Right cardiac atrium (tissue), 5 donors: ENCODE measurements at regions of chr10 and their contacts with region 1.

Region 1: DNA sequence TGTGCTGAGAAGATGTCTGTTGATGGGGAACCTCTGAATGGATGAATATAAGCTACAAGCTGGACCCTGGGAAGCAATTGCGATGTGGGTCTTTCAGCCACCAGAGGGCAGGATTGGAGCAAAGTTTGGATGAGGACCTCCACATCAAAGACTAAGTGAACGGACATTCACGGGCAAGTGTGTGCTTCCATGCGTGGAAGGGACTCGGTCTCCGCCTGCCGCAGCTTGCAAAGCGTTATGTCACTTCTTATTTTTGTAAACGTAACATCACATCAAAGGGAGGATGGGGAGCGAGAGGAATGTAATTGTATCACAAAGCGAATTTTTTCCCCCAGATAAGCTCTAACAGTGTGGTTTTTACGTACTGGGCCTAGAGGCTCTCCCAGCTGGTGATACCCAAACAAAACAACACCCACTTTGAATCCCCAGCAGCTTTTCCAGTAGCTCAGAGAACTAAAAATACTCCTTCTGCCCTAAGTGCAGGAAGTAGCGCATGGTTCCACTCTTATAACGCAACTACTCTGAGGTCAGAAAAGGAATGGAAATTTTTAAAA is 65.0 kb downstream of the VWA2 start:
- DNase-seq: peak; percentile 81 to 91 (median 85)
- ATAC-seq: peak; percentile 81 to 84
- H3K4me3 ChIP-seq: peak overlapping the region; percentile 7
- H3K27ac ChIP-seq: no peak overlapping the region
- H3K4me1 ChIP-seq: peaks cover 5% of the 10 kb centered on the region
- H3K27me3 ChIP-seq: no peaks in the 10 kb centered on the region

Region 2: DNA sequence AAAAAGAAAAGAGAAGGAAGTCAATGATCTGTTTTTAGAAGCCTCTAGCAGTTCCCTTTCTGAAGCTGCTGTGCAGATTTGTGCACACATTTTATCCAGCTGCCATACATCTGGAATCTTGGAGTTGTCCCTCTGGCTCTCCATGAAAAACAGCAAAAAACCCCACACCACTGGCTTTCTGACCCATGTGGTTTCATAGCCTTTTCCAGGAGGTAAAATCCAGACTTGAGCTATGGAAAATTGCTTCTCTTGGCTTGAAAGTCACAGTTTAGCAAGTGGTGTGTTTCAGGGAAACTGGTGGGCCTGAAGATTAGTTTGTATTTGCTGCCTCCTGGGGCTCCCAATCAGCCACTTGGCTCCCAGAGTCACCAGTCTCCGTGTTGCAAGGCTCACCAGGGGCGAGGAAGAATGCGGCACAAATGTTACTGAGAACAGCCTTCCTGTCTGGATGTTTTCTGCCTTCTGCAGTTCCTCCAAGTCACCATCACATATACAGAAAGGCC is 310.6 kb before region 1 on chr10:
- intact Hi-C with region 1: no loop called
- DNase-seq: peak; percentile 74 to 85 (median 81)
- ATAC-seq: peak; percentile 85 to 89
- H3K4me3 ChIP-seq: no peak overlapping the region
- H3K27ac ChIP-seq: peak overlapping the region; percentile 0
- H3K4me1 ChIP-seq: peaks cover 5% of the 10 kb centered on the region
- H3K27me3 ChIP-seq: no peaks in the 10 kb centered on the region

Region 3: DNA sequence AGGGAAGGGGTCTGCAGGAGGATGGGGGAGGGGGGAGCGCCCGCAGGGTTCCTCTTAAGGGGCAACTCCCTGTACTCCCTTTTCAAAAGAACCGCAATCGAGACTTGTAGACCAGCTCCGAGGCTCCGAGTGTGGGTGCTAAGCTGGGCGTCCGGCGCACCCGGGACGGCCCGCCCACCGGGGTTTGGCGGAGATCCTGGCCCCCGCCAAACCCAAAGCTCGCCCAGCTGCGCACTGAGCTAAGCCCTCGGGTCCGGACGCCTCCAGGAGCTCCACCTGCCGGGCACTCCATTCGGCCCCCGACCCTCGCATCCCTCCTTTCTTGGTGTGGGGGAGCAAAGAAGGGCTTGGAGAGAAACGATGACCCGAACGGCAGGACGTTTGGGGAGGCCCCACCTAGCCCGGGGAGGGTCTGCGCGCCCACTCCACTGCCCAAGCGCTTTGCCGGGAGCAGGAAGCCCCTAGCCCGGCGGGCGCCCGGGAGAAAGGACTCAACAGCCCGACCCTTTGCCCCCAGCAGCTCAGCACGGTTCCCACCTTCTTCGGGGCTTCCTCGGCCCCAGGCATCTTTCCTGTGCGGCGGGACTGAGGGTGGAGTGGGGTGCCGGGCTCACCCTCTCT is 99.6 kb after region 1 on chr10:
- intact Hi-C with region 1: no loop called
- DNase-seq: peak; percentile 35 to 75 (median 72)
- ATAC-seq: peak; percentile 66 to 74
- H3K4me3 ChIP-seq: peak overlapping the region; percentile 54
- H3K27ac ChIP-seq: no peak overlapping the region
- H3K4me1 ChIP-seq: no peaks in the 10 kb centered on the region
- H3K27me3 ChIP-seq: no peaks in the 10 kb centered on the region

Region 4: GRCh38 chr10:114427124-114427852 is 123.2 kb after region 1 on chr10:
- intact Hi-C with region 1: loop called in 2 of 4 experiments (anchors 5 to 10 kb)
- DNase-seq: peak in 1 of 3 donors; percentile 16
- ATAC-seq: peak; percentile 64 to 82
- H3K4me3 ChIP-seq: no peak overlapping the region
- H3K27ac ChIP-seq: peak overlapping the region; percentile 76
- H3K4me1 ChIP-seq: peaks cover 7% of the 10 kb centered on the region
- H3K27me3 ChIP-seq: no peaks in the 10 kb centered on the region

Region 5: GRCh38 chr10:114437456-114438292 is 133.6 kb after region 1 on chr10:
- intact Hi-C with region 1: loop called in 1 of 4 experiments (anchors 5 kb)
- DNase-seq: no peak
- ATAC-seq: no peak
- H3K4me3 ChIP-seq: no peak overlapping the region
- H3K27ac ChIP-seq: no peak overlapping the region
- H3K4me1 ChIP-seq: no peaks in the 10 kb centered on the region
- H3K27me3 ChIP-seq: no peaks in the 10 kb centered on the region

Region 6: GRCh38 chr10:114714281-114714741 is 410.2 kb after region 1 on chr10:
- intact Hi-C with region 1: no loop called
- DNase-seq: peak in 1 of 3 donors; percentile 45
- ATAC-seq: peak; percentile 66 to 79
- H3K4me3 ChIP-seq: no peak overlapping the region
- H3K27ac ChIP-seq: peak overlapping the region; percentile 60
- H3K4me1 ChIP-seq: peaks cover 11% of the 10 kb centered on the region
- H3K27me3 ChIP-seq: no peaks in the 10 kb centered on the region

Region 7: GRCh38 chr10:114779803-114780609 is 475.9 kb after region 1 on chr10:
- intact Hi-C with region 1: loop called in 2 of 4 experiments (anchors 10 kb)
- DNase-seq: no peak
- ATAC-seq: peak; percentile 45 to 78
- H3K4me3 ChIP-seq: no peak overlapping the region
- H3K27ac ChIP-seq: peak overlapping the region; percentile 45
- H3K4me1 ChIP-seq: no peaks in the 10 kb centered on the region
- H3K27me3 ChIP-seq: no peaks in the 10 kb centered on the region